ENCODE measurements at regions of chr19 and their contacts with region 1.

Region 1: GRCh38 chr19:57682226-57682766 is 519 bp downstream of the ZNF551 start:
- DNase-seq: no peak
- H3K4me3 Mint-ChIP-seq: peak overlapping the region; percentile 93
- H3K27ac Mint-ChIP-seq: peak overlapping the region; percentile 85
- H3K4me1 Mint-ChIP-seq: peaks cover 22% of the 10 kb centered on the region
- H3K27me3 Mint-ChIP-seq: no peaks in the 10 kb centered on the region

Region 2: GRCh38 chr19:57599761-57600383 is 82.4 kb before region 1 on chr19 and contains the start of gene ZNF530:
- intact Hi-C with region 1: loop called (anchors 5 kb)
- DNase-seq: peak; percentile 78
- H3K4me3 Mint-ChIP-seq: peak within 1 kb of the TSS; percentile 80
- H3K27ac Mint-ChIP-seq: no peak within 1 kb of the TSS
- H3K4me1 Mint-ChIP-seq: peaks cover 10% of the 10 kb centered on the region
- H3K27me3 Mint-ChIP-seq: no peaks in the 10 kb centered on the region
- total RNA-seq, gene ZNF530: 4.1 and 5.2 TPM in 2 replicates

Region 3: GRCh38 chr19:57620673-57621199 is 61.6 kb before region 1 on chr19:
- intact Hi-C with region 1: no loop called
- DNase-seq: no peak
- H3K4me3 Mint-ChIP-seq: no peak overlapping the region
- H3K27ac Mint-ChIP-seq: no peak overlapping the region
- H3K4me1 Mint-ChIP-seq: no peaks in the 10 kb centered on the region
- H3K27me3 Mint-ChIP-seq: no peaks in the 10 kb centered on the region

Region 4: GRCh38 chr19:58002384-58003173 is 320.3 kb after region 1 on chr19 and contains the start of gene ZNF606:
- intact Hi-C with region 1: loop called (anchors 5 kb)
- DNase-seq: peak; percentile 80
- H3K4me3 Mint-ChIP-seq: peak within 1 kb of the TSS; percentile 80
- H3K27ac Mint-ChIP-seq: peak within 1 kb of the TSS; percentile 73
- H3K4me1 Mint-ChIP-seq: peaks cover 12% of the 10 kb centered on the region
- H3K27me3 Mint-ChIP-seq: no peaks in the 10 kb centered on the region
- total RNA-seq, gene ZNF606: 6.3 and 6.4 TPM in 2 replicates

Measured in activated T-helper 2 cell treated with anti-CD3 and anti-CD28 coated beads, Interferon-gamma antibody, Interleukin-2, Interleukin-4, amounts not matched to agents 10 μg/mL and 5 μg/mL and 100 μg/mL, durations not matched to agents 14 hours and 24 hours and 36 hours (primary cell).